Testis (tissue), 5 donors: ENCODE measurements at regions of chr15 and their contacts with region 1.

Region 1: DNA sequence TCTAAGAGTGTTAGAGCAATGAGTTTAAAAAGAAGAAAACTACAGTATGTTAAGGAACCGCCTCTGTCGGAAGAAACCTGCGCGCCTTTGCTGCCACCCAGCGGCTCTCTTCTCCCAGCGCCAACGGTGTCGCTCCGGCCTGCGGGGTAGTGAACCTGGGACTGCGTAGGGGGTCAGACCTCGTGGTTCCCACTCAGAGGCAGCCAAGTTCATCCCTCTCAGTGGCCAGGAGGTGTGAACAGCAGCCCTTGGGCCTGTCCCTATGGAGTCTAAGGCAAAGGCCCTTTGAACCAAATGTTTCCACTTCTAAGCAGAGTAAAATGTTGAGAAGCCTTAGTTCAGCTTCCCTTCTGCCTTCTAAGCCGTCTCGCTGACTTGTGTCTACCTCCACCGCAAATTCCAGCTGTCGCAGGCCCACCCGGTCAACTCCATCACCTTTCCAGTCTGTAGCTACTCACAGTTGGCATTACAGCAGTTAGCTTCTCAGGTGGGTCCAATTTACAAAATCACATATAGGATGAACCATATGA is 980 bp upstream of the RAB27A start:
- DNase-seq: peak; percentile 89
- H3K4me3 ChIP-seq: peak overlapping the region; percentile 84 to 85
- H3K27ac ChIP-seq: peak overlapping the region; percentile 83 to 93
- H3K4me1 ChIP-seq: peaks cover 3% of the 10 kb centered on the region
- H3K27me3 ChIP-seq: no peaks in the 10 kb centered on the region
- CTCF ChIP-seq: peak; percentile 63 to 76 (median 73)
- POLR2A ChIP-seq: no peak

Region 2: DNA sequence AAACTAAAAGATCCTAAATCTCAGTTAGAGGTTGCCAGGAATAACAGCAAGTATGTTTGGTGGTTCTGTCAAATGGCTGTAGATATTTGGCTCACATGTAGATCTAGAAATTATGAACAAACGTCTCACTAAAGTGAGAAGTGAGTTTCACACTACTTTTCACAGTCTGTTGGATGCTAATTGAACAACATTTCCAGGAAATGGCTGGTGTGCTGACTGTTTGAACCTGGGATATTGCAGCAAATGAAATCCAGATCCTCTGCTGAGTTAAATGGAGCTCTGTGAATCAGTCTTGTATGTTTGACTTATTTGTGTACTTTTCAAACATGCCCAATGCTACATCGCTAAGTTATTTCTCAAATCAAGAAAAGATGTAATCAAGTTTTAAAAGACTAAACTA is 72.5 kb before region 1 on chr15:
- intact Hi-C with region 1: loop called (anchors 5 kb)
- DNase-seq: no peak
- H3K4me3 ChIP-seq: no peak overlapping the region
- H3K27ac ChIP-seq: no peak overlapping the region
- H3K4me1 ChIP-seq: no peaks in the 10 kb centered on the region
- H3K27me3 ChIP-seq: no peaks in the 10 kb centered on the region
- CTCF ChIP-seq: no peak
- POLR2A ChIP-seq: no peak